T-cell (primary cell): ENCODE measurements at regions of chr5 and their contacts with region 1.

Region 1: GRCh38 chr5:91212714-91213092 is 170.4 kb downstream of the ARRDC3 start:
- DNase-seq: no peak
- ATAC-seq: no peak
- H3K4me3 ChIP-seq: no peak overlapping the region
- H3K4me3 Mint-ChIP-seq: no peak overlapping the region
- H3K27ac ChIP-seq: no peak overlapping the region
- H3K27ac Mint-ChIP-seq: no peak overlapping the region
- H3K4me1 ChIP-seq: no peaks in the 10 kb centered on the region
- H3K4me1 Mint-ChIP-seq: no peaks in the 10 kb centered on the region
- H3K27me3 ChIP-seq: peaks cover 0 to 7% of the 10 kb centered on the region in 2 experiments
- H3K27me3 Mint-ChIP-seq: peaks cover 0 to 4% of the 10 kb centered on the region in 2 donors

Region 2: GRCh38 chr5:90898330-90899013 is 314.2 kb before region 1 on chr5:
- CTCF ChIA-PET with region 1: interaction called in 1 of 2 experiments, 13 read pairs
- POLR2A ChIA-PET with region 1: no interaction called
- DNase-seq: no peak
- ATAC-seq: no peak
- H3K4me3 ChIP-seq: no peak overlapping the region
- H3K4me3 Mint-ChIP-seq: no peak overlapping the region
- H3K27ac ChIP-seq: no peak overlapping the region
- H3K27ac Mint-ChIP-seq: no peak overlapping the region
- H3K4me1 ChIP-seq: no peaks in the 10 kb centered on the region
- H3K4me1 Mint-ChIP-seq: no peaks in the 10 kb centered on the region
- H3K27me3 ChIP-seq: no peaks in the 10 kb centered on the region
- H3K27me3 Mint-ChIP-seq: no peaks in the 10 kb centered on the region